HEK293 (cell line): ENCODE measurements at regions of chr12 and their contacts with region 1.

Region 1: DNA sequence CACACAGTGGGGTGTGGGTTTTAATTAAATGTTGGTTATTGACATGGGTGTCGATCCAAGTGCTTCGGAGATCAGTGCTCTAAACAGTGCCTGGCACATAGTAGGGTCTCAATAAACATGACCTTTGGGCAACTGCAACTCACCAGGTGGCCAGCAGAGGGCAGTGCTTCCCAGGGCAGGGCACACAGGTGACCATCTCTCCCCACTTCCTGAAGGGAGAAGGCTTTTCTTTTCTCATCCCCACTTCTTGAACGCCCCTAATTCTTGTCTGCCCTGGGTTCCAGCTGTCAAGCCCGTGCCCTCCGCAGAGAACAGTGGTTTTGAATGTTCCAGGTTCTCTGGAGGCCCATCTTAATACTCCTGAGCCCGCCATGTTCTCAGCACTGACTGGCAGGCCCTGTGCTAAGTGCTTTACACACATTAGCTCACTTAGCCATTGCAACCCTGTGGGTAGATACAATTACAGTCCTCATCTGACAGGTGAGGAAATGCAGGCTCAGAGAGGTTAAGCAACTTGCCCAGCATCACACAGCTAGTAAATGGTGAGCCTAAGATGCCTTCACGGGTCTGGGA is 16.3 kb downstream of the RAPGEF3 start:
- H3K4me3 ChIP-seq: no peak overlapping the region
- H3K27ac ChIP-seq: no peak overlapping the region
- H3K4me1 ChIP-seq: no peaks in the 10 kb centered on the region
- CTCF ChIP-seq: peak; percentile 82

Region 2: GRCh38 chr12:47147739-47148138 is 594.6 kb before region 1 on chr12:
- CTCF ChIA-PET with region 1: no interaction called
- POLR2A ChIA-PET with region 1: no interaction called
- H3K4me3 ChIP-seq: no peak overlapping the region
- H3K27ac ChIP-seq: no peak overlapping the region
- H3K4me1 ChIP-seq: no peaks in the 10 kb centered on the region
- CTCF ChIP-seq: no peak

Region 3: DNA sequence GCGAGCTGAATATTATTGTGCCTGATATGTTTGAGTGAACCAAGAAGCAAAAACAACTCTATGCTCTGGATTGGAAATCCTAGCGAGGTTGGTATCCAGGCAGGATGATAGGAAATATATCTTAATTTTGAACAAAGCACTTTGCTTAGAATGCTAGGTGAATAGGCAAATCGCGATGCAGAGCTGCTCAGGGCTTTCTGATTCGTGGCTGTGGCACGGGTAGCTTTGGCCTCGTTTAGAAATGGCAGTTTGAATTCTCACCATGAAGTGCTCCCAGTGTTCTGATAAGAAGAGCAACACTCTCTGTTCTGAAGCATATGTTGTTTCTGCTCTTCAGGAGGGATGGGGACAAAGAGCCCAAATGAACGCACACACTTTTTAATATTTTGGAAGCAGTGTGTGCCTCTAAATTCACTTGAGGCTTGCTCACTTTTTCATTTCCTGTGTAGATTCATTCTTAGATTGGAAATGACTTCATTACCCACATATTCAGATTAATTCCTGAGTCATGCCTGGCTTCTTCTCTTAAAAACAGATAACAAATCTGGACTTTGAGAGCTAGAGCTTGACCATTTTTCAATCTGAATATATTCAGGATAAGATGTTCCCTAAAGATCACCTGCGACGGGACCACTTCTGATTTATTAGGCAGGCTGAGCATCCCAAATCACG is 237.4 kb before region 1 on chr12:
- CTCF ChIA-PET with region 1: no interaction called
- POLR2A ChIA-PET with region 1: no interaction called
- H3K4me3 ChIP-seq: no peak overlapping the region
- H3K27ac ChIP-seq: no peak overlapping the region
- H3K4me1 ChIP-seq: no peaks in the 10 kb centered on the region
- CTCF ChIP-seq: no peak

Region 4: DNA sequence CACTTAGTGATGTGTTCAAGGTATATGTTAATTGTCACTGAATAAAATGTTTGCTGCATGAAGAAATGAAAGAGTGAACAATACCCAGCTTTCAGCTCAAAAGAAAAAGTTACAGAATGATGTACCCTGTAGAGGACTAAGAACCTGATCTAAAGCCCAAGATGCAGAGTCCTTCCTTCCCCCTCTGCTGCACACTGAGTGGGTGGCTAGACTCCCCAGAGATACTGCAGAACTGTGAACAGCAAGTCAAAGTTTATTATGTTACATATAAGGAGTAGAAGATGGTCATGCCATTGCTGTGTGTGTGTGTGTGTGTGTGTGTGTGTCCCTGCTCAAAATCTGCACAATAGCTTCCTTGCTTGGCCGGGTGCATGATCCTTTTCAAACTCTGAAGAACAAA is 120.4 kb before region 1 on chr12:
- CTCF ChIA-PET with region 1: no interaction called
- POLR2A ChIA-PET with region 1: no interaction called
- H3K4me3 ChIP-seq: no peak overlapping the region
- H3K27ac ChIP-seq: no peak overlapping the region
- H3K4me1 ChIP-seq: no peaks in the 10 kb centered on the region
- CTCF ChIP-seq: no peak

Region 5: GRCh38 chr12:47715393-47715876 is 26.9 kb before region 1 on chr12:
- CTCF ChIA-PET with region 1: interaction called, 353 read pairs
- POLR2A ChIA-PET with region 1: interaction called, 4 read pairs
- H3K4me3 ChIP-seq: no peak overlapping the region
- H3K27ac ChIP-seq: no peak overlapping the region
- H3K4me1 ChIP-seq: peaks cover 5% of the 10 kb centered on the region
- CTCF ChIP-seq: peak; percentile 69

Region 6: DNA sequence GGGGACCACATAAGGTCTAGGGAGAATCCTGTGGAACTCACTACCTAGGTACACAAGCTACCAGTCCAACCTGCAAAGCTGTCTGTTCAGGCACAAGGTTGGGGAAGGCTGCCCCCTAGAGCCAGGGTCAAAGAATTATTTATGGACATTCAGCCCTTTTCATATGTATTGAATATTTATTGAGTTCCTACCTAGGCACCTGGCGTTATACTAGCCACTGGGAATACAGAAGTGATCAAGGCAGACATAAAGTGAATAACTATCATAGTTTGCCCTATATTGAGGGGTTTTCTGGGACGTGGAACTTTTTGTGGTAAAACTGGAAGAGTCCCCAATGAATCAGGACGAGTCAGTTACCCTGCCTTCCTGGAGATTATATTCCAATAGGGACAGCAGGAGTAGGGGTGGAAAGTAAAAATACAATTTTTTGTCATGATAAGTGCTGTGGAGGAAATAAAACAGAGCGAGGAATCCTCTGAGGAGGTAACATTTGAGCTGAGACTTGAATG is 24.9 kb after region 1 on chr12:
- CTCF ChIA-PET with region 1: interaction called, 784 read pairs
- POLR2A ChIA-PET with region 1: interaction called, 34 read pairs
- H3K4me3 ChIP-seq: no peak overlapping the region
- H3K27ac ChIP-seq: no peak overlapping the region
- H3K4me1 ChIP-seq: no peaks in the 10 kb centered on the region; the same call in 1 of the 2 replicates
- CTCF ChIP-seq: 0 out of 2 replicates have a peak, but pooled peaks have one; percentile 18

Region 7: GRCh38 chr12:47785036-47785886 is 42.9 kb after region 1 on chr12:
- CTCF ChIA-PET with region 1: interaction called, 784 read pairs
- POLR2A ChIA-PET with region 1: interaction called, 3 read pairs
- H3K4me3 ChIP-seq: no peak overlapping the region
- H3K27ac ChIP-seq: no peak overlapping the region
- H3K4me1 ChIP-seq: no peaks in the 10 kb centered on the region
- CTCF ChIP-seq: no peak

Region 8: DNA sequence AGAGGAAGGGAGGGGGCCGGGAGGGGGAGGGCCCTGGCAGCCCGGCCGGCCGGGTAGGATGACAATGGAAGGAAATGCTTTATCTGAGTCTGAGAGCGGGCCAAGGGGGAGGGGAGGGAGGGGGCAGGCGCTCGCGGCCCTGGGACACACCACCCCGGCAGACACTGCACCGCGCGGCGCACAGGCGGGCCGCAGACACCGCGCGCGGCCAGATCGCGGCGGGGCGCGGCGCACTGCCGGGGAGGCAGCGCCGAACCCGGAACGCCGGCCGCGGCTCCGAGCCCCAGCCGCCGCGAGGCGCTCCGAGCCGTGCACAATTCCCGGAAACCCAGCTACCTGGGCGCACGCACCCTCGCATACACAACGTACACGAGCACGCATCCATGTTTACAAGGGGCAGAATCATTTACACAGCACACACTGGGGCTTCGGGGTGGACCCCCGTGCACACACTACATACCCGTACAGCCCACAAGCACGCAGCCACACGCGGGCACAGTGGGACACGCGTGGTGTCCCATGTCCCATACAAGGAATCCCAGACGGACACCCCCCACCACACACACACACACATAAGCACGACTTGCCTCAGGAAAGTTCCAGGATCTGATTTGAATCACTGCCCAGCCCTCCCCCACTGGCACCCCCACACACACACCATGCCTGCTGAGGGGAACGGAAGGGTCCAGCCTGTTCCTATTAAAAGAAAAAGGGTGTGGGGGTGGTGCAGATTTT is 77.7 kb after region 1 on chr12 and contains the start of gene HDAC7:
- CTCF ChIA-PET with region 1: interaction called, 10 read pairs
- POLR2A ChIA-PET with region 1: no interaction called
- H3K4me3 ChIP-seq: peak within 1 kb of the TSS; percentile 67
- H3K27ac ChIP-seq: peak within 1 kb of the TSS; percentile 89
- H3K4me1 ChIP-seq: peaks cover 3% of the 10 kb centered on the region; the same call in 1 of the 2 replicates
- CTCF ChIP-seq: no peak; the same call in 1 of the 2 replicates

Region 9: DNA sequence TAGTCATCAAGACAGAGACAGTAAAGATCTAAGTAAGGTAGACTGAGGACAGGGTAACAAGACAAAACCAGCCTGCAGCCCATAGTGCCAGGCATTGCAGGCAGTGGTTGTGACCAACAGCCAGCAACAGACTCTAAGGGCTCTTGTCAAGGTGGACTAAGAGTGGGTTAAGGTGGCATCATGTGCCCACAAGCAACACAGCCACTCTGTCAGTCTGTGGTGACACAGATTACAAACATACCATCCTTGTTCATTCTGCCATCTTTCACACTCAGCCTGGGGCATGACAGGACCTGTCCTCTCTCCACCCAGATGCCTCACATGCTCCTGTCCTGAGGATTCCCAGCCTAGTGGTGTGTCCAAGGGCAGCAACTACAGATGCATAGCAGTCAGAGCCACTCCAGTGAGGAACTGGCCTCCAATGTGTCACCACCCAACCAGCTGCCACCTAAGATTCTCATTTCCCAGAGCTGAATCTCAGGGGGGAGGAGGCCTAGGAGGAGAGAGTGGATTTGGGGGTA is 134.2 kb after region 1 on chr12:
- CTCF ChIA-PET with region 1: no interaction called
- POLR2A ChIA-PET with region 1: no interaction called
- H3K4me3 ChIP-seq: no peak overlapping the region
- H3K27ac ChIP-seq: no peak overlapping the region
- H3K4me1 ChIP-seq: no peaks in the 10 kb centered on the region
- CTCF ChIP-seq: no peak

Region 10: GRCh38 chr12:47949441-47950308 is 207.3 kb after region 1 on chr12:
- CTCF ChIA-PET with region 1: interaction called, 15 read pairs
- POLR2A ChIA-PET with region 1: no interaction called
- H3K4me3 ChIP-seq: no peak overlapping the region
- H3K27ac ChIP-seq: no peak overlapping the region
- H3K4me1 ChIP-seq: no peaks in the 10 kb centered on the region; the same call in 1 of the 2 replicates
- CTCF ChIP-seq: peak; percentile 87